IMR-90 (cell line): ENCODE measurements at regions of chr2 and their contacts with region 1.

Region 1: DNA sequence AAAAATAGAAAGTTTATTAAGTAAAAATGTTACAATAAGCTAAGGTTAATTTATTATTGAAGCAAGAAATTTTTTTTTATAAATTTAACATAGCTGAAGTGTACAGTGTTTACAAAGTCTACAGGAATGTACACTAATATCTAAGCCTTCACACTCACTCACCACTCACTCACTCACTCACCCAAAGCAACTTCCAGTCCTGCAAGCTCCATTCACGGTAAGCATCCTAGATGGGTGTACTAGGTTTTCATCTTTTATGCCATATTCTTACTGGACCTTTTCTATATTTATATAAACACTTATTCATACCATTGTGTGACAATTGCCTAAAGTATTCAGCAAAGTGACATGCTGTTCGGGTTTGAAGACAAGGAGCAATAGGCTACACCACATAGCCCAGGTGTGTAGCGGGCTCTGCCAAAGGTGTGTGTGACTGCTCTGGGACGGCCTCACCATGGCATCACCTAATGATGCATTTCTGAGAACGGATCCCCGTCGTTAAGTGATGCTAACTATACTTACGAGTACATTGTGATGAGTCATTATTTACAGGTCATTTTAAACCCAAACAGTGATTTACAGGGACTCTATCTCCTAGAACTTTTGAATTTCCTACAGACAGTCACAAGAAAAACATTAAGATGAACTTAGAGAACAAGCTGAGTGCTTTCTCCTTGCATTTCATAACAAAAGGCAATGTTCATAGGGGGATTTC is 76.3 kb upstream of the ID2 start:
- DNase-seq: peak; percentile 85
- ATAC-seq: peak; percentile 79
- H3K4me3 ChIP-seq: no peak overlapping the region
- H3K27ac ChIP-seq: peak overlapping the region; percentile 41; the same call in 1 of the 2 replicates
- H3K4me1 ChIP-seq: peaks cover 18% of the 10 kb centered on the region
- H3K27me3 ChIP-seq: no peaks in the 10 kb centered on the region
- CTCF ChIP-seq: no peak
- POLR2A ChIP-seq: no peak
- RAD21 ChIP-seq: peak; percentile 8; the same call in 1 of the 2 replicates

Region 2: GRCh38 chr2:8633735-8634313 is 28.3 kb after region 1 on chr2:
- CTCF ChIA-PET with region 1: no interaction called
- POLR2A ChIA-PET with region 1: no interaction called
- dilution Hi-C with region 1: no loop called
- in situ Hi-C with region 1: no loop called
- intact Hi-C with region 1: loop called (anchors 1 kb)
- DNase-seq: peak; percentile 96
- ATAC-seq: peak; percentile 66
- H3K4me3 ChIP-seq: no peak overlapping the region
- H3K27ac ChIP-seq: peak overlapping the region; percentile 83
- H3K4me1 ChIP-seq: peaks cover 30% of the 10 kb centered on the region
- H3K27me3 ChIP-seq: no peaks in the 10 kb centered on the region
- CTCF ChIP-seq: no peak
- POLR2A ChIP-seq: no peak
- RAD21 ChIP-seq: no peak